ENCODE measurements at regions of chr17 and their contacts with region 1.

Region 1: GRCh38 chr17:41082626-41083025 is 1.3 kb upstream of the KRTAP4-7 start:
- DNase-seq: no peak
- H3K4me3 Mint-ChIP-seq: no peak overlapping the region
- H3K27ac Mint-ChIP-seq: no peak overlapping the region
- H3K4me1 Mint-ChIP-seq: no peaks in the 10 kb centered on the region
- H3K27me3 Mint-ChIP-seq: peaks cover 6% of the 10 kb centered on the region

Region 2: GRCh38 chr17:41107941-41108450 is 25.4 kb after region 1 on chr17:
- CTCF ChIA-PET with region 1: interaction called, 3 read pairs
- intact Hi-C with region 1: loop called (anchors 2 kb)
- DNase-seq: no peak
- H3K4me3 Mint-ChIP-seq: no peak overlapping the region
- H3K27ac Mint-ChIP-seq: no peak overlapping the region
- H3K4me1 Mint-ChIP-seq: peaks cover 8% of the 10 kb centered on the region
- H3K27me3 Mint-ChIP-seq: no peaks in the 10 kb centered on the region

Region 3: GRCh38 chr17:41153856-41154255 is 71.2 kb after region 1 on chr17:
- CTCF ChIA-PET with region 1: no interaction called
- intact Hi-C with region 1: no loop called
- DNase-seq: no peak
- H3K4me3 Mint-ChIP-seq: no peak overlapping the region
- H3K27ac Mint-ChIP-seq: no peak overlapping the region
- H3K4me1 Mint-ChIP-seq: no peaks in the 10 kb centered on the region
- H3K27me3 Mint-ChIP-seq: peaks cover 4% of the 10 kb centered on the region